Tibial artery (tissue), 4 donors: ENCODE measurements at regions of chr12 and their contacts with region 1.

Region 1: GRCh38 chr12:10771132-10771733 is 31.2 kb downstream of the TAS2R7 start:
- DNase-seq: no peak
- H3K4me3 ChIP-seq: no peak overlapping the region
- H3K27ac ChIP-seq: no peak overlapping the region
- H3K4me1 ChIP-seq: no peaks in the 10 kb centered on the region
- H3K27me3 ChIP-seq: peaks cover 0 to 28% of the 10 kb centered on the region in 2 donors
- CTCF ChIP-seq: peak; percentile 54 to 75

Region 2: DNA sequence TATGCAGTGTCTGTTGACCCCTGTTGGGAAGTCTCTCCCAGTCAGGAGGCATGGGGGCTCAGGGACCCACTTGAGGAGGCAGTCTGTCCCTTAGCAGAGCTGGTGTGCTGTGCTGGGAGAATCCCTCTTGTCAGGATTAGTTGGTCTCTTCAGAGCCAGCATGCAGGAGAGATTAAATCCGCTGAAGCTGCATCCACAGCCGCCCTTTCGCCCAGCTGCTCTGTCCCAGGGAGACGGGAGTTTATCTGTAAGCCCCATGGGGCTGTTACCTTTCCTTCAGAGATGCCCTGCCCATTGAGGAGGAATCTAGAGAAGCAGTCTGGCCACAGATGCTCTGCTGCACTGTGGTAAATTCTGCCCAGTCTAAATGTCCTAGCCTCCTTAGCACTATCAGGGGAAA is 304.9 kb before region 1 on chr12:
- intact Hi-C with region 1: no loop called
- DNase-seq: no peak
- H3K4me3 ChIP-seq: no peak overlapping the region
- H3K27ac ChIP-seq: no peak overlapping the region
- H3K4me1 ChIP-seq: no peaks in the 10 kb centered on the region
- H3K27me3 ChIP-seq: no peaks in the 10 kb centered on the region
- CTCF ChIP-seq: no peak

Region 3: DNA sequence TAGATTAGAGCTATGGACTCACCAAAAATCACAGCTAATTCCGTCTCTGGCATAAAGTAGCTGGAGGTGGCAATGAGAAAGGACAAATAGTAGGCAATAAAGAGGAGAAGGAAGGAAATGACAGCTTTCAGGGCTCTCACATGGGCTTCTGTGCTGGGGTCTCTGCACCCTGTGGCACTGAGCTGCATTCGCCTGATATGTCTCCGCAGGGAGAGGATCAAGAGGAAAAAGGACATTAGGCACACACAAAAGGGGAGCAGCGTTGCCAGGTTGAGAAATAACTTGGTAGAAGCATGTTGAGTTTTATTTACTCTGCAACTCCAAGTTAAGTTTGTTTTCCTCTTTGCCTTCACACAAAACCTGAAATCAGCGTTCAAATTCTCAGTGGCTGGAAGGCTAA is 30.5 kb after region 1 on chr12:
- intact Hi-C with region 1: no loop called
- DNase-seq: no peak
- H3K4me3 ChIP-seq: no peak overlapping the region
- H3K27ac ChIP-seq: no peak overlapping the region
- H3K4me1 ChIP-seq: no peaks in the 10 kb centered on the region
- H3K27me3 ChIP-seq: no peaks in the 10 kb centered on the region
- CTCF ChIP-seq: no peak

Region 4: GRCh38 chr12:11202811-11203210 is 431.6 kb after region 1 on chr12:
- intact Hi-C with region 1: loop called (anchors 5 kb)
- DNase-seq: no peak
- H3K4me3 ChIP-seq: no peak overlapping the region
- H3K27ac ChIP-seq: no peak overlapping the region
- H3K4me1 ChIP-seq: no peaks in the 10 kb centered on the region
- H3K27me3 ChIP-seq: no peaks in the 10 kb centered on the region
- CTCF ChIP-seq: no peak

Region 5: DNA sequence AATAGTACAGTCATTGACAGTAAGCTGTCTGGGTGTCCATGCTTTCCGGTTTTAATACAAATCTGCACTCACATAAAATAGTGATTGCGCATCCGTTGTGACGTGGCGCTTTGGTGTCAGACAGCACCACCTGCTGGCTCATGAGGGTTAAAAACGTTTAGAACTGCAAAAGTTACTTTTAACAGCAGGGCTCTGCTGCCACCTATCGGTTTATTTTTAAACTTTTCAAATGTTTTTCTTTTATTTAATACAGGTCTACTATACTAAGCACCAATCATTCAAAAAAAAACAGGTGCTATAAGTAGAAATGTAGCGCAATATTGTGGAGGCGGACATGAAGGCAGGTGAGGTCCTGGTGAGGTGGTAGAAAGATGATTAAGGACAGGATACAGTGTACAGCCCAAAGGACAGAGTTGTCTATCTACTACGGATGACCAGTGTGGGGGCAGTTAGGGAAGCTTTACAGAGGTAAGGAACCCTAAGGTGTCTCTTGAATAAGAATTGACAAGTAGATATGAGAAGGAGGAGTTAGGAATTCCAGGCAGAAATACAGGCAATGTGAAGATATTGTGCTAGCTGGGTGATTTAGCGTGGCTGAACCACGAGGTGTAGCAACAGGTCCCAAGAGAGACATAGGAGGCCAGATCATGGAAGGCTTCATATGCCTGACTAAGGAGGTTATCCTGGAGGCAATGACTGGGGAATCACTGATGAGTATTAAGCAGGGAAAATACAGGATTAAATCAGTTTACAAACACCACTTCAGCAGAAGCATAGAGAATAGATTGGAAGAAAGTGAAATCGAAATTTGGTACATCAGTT is 715.6 kb after region 1 on chr12:
- intact Hi-C with region 1: loop called (anchors 10 kb)
- DNase-seq: peak; percentile 67 to 80
- H3K4me3 ChIP-seq: no peak overlapping the region
- H3K27ac ChIP-seq: no peak overlapping the region
- H3K4me1 ChIP-seq: peaks cover 0 to 10% (median 1%) of the 10 kb centered on the region in 4 donors
- H3K27me3 ChIP-seq: peaks cover 0 to 3% of the 10 kb centered on the region in 2 donors
- CTCF ChIP-seq: peak; percentile 92 to 93